HAP-1 (cell line): ENCODE measurements at regions of chr1 and their contacts with region 1.

Region 1: DNA sequence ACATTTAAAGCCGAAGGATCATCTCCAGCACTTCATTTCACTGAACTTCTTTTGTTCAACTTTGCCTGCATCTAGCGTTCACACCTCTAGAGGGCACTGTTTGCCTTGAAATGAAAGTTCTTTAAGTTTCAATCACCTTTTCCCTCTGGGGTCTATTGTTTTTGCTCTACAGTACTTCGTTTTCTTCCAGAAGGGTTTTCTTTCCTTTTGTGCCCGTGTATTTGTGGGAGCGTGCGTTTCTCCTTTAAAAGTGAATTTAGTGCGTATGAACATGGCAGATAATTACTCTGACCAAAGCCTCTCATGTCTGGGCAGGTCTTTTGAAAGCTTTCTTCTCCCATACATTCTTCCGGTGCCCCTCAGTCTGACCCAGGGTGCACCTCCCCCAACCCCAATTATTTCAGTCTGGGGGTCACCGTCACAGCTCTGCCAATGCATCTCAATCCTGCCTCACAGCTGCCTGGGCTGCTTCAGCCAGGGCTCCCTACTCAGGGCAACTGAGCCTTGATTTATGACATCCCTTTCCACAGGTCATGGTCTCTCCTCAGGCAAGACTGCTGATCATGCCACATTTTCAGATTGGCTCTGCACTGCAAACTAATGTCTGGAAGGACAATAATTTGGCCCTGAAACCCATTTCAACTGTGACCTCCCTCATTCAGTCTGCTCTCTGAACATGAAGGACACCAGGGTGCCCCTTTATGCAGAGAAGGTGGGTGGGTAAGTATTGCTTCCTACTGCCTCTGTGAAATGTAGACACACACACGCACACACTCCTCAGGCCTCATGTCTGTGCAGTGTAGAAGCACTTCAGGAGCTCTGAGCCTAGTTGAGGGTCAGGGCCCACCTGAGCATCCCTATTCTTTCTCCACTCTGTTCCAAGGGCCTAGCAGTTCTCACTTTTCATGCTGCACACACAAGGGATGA is 88.6 kb downstream of the NUF2 start:
- DNase-seq: peak; percentile 72 to 81
- H3K4me3 ChIP-seq: no peak overlapping the region
- H3K4me1 ChIP-seq: no peaks in the 10 kb centered on the region
- H3K27me3 ChIP-seq: no peaks in the 10 kb centered on the region

Region 2: GRCh38 chr1:163528710-163529348 is 118.5 kb after region 1 on chr1:
- in situ Hi-C with region 1: loop called (anchors 25 kb)
- DNase-seq: peak; percentile 19 to 46
- H3K4me3 ChIP-seq: no peak overlapping the region
- H3K4me1 ChIP-seq: no peaks in the 10 kb centered on the region
- H3K27me3 ChIP-seq: no peaks in the 10 kb centered on the region

Region 3: DNA sequence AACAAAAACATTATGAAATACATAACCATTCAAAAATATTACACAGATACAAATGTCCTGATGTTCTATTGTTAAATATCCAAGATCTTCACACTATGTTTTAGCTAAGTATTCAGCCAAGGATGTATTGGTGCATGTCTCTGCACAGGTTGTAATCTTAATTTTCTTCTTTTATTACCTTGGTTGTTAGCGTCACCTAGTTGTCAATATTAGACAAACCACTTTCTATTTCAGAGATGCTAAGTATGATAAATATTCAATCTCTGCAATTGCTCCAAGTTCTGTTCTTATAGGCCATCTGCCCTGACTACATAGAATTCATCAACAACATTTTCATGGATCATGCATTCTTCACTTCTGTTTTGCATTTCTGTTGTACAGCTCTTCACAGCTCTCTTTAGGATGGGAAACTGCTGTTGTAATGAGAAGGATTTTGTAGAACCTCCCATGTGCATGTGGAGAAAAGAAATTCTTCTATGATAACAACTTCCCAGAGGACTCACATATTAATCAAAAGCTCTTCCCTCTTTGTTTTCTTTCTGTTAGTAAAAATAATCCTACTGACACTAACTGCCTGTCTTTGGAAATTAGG is 291.5 kb after region 1 on chr1:
- in situ Hi-C with region 1: loop called (anchors 10 kb)
- DNase-seq: no peak
- H3K4me3 ChIP-seq: no peak overlapping the region
- H3K4me1 ChIP-seq: no peaks in the 10 kb centered on the region
- H3K27me3 ChIP-seq: peaks cover 5% of the 10 kb centered on the region; the same call in 1 of the 2 replicates

Region 4: DNA sequence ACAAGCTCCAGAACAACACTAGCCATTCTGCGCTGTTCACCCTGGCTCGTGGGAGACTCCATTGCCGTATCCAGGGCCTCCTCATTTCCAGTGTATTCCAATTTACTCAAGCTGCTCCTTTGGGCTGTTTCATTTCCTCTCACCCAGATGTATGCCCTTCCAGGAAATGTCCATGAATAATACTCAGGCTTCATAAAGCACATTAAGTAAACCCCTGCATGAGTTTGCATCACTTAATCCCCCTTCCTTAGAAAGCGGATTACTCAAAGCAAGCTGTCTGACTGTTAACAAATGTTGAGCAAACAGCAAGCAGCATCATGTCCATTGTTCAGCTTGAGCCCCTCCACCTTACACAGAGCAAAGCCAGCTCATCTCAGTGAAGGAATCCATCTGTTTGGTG is 745.0 kb after region 1 on chr1:
- in situ Hi-C with region 1: loop called (anchors 25 kb)
- DNase-seq: no peak
- H3K4me3 ChIP-seq: no peak overlapping the region
- H3K4me1 ChIP-seq: no peaks in the 10 kb centered on the region
- H3K27me3 ChIP-seq: no peaks in the 10 kb centered on the region